ENCODE measurements at regions of chr7 and their contacts with region 1.

Region 1: DNA sequence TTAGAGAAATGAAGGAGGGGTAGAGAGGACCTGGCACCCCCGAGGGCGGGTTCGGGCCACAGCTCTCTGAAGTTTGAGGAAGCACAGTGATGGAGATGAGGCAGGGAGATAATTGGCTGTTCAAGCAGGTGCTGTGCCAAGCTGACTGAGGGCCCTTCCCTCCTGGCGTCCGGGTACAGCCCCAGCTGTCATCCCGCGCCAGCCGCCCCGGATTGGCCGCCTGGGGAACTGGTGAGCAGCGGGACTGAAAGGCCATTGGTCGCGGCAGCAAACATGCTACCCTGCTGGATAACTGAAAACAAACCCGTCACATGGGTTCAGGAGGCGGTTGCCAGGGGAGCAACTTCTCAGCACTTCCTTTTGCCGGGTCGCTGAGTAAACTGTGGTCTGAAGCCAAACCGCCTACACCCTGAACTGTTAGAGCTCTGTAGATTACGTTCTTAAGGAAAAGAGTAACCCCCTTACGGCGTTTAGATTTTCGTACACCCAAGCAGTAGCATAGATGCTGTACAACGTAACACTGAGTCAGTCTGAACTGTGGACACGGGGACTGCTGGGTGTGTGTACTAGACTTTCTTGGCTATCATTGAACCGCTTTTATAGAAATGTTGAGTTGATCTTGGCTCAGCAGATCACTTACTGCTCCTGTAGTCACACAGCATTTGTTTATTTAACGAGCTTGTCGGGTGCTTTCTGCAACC is 1.3 kb downstream of the INSIG1 start:
- DNase-seq: peak; percentile 92
- ATAC-seq: peak; percentile 85
- H3K4me3 ChIP-seq: peak overlapping the region; percentile 94
- H3K27ac ChIP-seq: peak overlapping the region; percentile 88
- H3K4me1 ChIP-seq: peaks cover 6% of the 10 kb centered on the region
- H3K27me3 ChIP-seq: no peaks in the 10 kb centered on the region
- CTCF ChIP-seq: no peak
- EP300 ChIP-seq: peak; percentile 43 to 57; a peak in 3 of 4 replicates
- POLR2A ChIP-seq: peak; percentile 84
- RAD21 ChIP-seq: no peak

Region 2: DNA sequence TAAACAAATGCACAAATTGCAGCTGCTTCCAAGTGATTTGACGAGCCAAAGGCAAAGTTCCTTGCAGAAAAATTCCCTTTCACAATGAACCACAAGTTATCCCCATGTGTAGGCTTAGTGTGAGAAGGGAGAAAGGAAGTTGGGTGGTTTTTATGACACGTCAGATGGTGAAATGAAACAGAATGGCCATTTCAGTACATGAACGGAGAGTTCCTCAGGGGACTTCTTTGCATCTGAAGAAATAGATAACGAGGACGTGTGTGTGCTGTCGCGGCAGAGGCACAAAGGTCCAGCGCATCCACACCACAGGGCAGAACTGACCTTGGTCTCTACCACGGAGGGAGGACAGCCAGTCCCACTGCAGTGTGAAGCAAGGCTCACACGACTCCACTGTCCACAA is 431.9 kb before region 1 on chr7:
- CTCF ChIA-PET with region 1: no interaction called
- POLR2A ChIA-PET with region 1: no interaction called
- RAD21 ChIA-PET with region 1: no interaction called
- SMC1A ChIA-PET with region 1: no interaction called
- in situ Hi-C with region 1: no loop called
- intact Hi-C with region 1: loop called (anchors 10 kb)
- DNase-seq: peak; percentile 59
- ATAC-seq: peak; percentile 80
- H3K4me3 ChIP-seq: no peak overlapping the region
- H3K27ac ChIP-seq: no peak overlapping the region
- H3K4me1 ChIP-seq: peaks cover 8% of the 10 kb centered on the region
- H3K27me3 ChIP-seq: no peaks in the 10 kb centered on the region
- CTCF ChIP-seq: no peak
- EP300 ChIP-seq: peak; percentile 58 to 77; a peak in 2 of 4 replicates
- POLR2A ChIP-seq: no peak
- RAD21 ChIP-seq: no peak

Region 3: DNA sequence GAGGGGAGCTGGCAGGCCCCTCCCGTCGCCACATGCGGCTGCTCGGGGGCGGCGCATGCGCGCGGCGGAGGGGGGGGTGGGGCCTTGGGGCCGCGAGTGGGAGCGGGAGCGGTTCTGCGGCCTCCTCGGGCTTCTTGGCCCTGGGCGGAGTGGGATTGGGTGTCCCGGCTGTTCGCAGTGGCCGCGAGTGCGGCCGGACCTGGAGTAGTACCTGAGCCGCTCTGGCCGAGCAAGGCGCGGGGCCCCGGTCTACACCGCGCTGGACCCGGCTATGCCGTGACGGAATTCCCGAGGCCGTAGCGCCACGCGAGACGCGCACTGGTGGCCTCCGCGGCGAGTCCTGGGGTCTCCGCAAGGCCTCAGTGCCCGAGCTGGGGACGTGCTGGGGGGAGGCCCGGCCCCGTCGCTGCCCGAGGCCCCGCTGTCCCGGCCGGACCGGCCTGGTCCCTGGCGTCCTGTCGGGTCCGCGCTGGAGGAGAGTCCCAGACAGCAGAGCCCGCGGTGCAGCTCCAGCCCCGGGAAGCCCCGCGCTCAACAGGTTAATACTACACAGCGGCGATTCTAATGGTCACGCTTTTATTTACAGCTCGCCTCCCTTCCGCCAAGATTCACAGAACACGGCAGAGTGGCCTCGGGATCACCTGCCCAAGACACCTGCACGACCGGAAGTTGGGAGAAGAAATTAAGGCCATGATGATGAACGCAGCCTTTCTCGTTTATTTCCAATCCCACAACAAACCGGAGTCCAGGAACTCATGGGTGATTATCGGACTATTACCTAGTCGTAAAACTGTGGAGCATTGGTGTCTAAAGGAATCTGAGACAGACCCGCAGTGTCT is 295.4 kb before region 1 on chr7:
- CTCF ChIA-PET with region 1: interaction called, 3 read pairs
- POLR2A ChIA-PET with region 1: interaction called, 7 read pairs
- RAD21 ChIA-PET with region 1: interaction called, 7 read pairs
- SMC1A ChIA-PET with region 1: interaction called, 3 read pairs
- in situ Hi-C with region 1: loop called (anchors 5 kb)
- intact Hi-C with region 1: loop called (anchors 5 kb)
- DNase-seq: no peak
- ATAC-seq: peak; percentile 75
- H3K4me3 ChIP-seq: peak overlapping the region; percentile 77
- H3K27ac ChIP-seq: peak overlapping the region; percentile 93
- H3K4me1 ChIP-seq: 0 out of 2 replicates have a peak, but pooled peaks cover 5% of the 10 kb centered on the region
- H3K27me3 ChIP-seq: no peaks in the 10 kb centered on the region
- CTCF ChIP-seq: no peak
- EP300 ChIP-seq: no peak
- POLR2A ChIP-seq: peak; percentile 87
- RAD21 ChIP-seq: no peak

Region 4: DNA sequence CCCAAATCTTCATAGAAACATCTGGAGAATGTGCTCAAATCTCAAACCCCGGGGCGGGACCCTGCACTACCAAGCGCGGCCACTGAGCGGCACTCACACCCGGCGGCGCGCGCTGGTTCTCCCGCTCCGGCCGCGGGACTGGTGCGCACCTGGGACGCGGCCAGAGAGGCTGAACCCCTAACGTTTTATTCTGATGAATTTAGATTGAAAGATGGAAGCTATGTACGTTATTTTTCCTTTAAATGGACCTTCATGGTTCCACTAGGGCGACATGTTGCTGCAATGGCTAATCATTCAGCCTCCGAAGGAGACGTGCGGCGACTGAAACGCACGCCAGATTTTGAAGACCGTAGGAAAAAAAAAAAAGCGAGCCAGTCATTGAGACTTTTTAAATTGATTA is 108.3 kb before region 1 on chr7:
- CTCF ChIA-PET with region 1: no interaction called
- POLR2A ChIA-PET with region 1: interaction called, 3 read pairs
- RAD21 ChIA-PET with region 1: no interaction called
- SMC1A ChIA-PET with region 1: interaction called, 3 read pairs
- in situ Hi-C with region 1: no loop called
- intact Hi-C with region 1: loop called (anchors 5 kb)
- DNase-seq: no peak
- ATAC-seq: peak; percentile 80
- H3K4me3 ChIP-seq: no peak overlapping the region
- H3K27ac ChIP-seq: no peak overlapping the region
- H3K4me1 ChIP-seq: peaks cover 7% of the 10 kb centered on the region; the same call in 1 of the 2 replicates
- H3K27me3 ChIP-seq: no peaks in the 10 kb centered on the region
- CTCF ChIP-seq: peak; percentile 76 to 91 (median 82)
- EP300 ChIP-seq: no peak
- POLR2A ChIP-seq: no peak
- RAD21 ChIP-seq: peak; percentile 93

Region 5: DNA sequence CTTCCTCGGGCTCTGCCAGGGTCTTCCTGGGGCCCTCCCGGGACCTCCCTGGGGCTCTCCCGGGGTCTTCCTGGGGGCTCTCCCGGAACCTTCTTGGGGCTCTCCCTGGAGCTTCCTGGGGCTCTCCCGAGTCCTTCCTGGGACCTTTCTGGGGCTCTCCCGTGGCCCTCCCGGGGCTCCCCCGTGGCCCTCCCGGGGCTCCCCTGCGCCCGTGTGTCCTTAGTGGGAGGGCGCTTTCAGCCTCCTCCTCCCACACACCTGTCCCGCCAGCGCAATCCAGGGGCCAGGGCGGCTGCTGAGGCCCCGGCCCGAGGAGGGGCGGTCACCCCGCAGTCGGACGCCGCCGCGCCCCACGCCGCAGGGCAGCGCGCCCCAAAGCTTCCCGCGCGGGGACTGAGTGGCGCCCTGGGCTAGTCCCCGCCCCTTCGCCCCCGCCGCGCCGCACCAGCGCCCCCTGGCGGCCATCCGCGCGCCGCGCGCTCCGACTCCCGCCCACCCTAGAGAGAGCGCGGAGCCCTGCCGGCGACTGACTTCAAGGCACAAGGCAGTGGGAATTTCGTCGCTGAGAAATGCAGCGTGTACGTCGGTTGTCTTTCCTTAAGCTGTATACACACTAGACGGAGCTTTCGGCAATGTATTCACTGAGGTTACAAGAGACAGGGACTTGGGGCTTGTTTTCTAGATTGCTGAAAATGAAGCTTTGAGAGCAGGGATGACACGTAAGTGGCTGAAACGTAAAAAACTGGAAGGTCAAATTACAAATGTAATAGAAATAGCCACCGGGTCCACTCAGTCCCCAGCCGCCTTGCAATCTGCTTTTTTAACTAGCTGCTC is 45.8 kb after region 1 on chr7:
- CTCF ChIA-PET with region 1: interaction called, 10 read pairs
- POLR2A ChIA-PET with region 1: interaction called, 7 read pairs
- RAD21 ChIA-PET with region 1: interaction called, 10 read pairs
- SMC1A ChIA-PET with region 1: interaction called, 6 read pairs
- in situ Hi-C with region 1: no loop called
- intact Hi-C with region 1: loop called (anchors 1 kb)
- DNase-seq: no peak
- ATAC-seq: peak; percentile 98
- H3K4me3 ChIP-seq: peak overlapping the region; percentile 63; the same call in 1 of the 2 replicates
- H3K27ac ChIP-seq: no peak overlapping the region
- H3K4me1 ChIP-seq: peaks cover 5% of the 10 kb centered on the region; the same call in 1 of the 2 replicates
- H3K27me3 ChIP-seq: no peaks in the 10 kb centered on the region
- CTCF ChIP-seq: peak; percentile 71 to 73 (median 72); a peak in 5 of 6 replicates
- EP300 ChIP-seq: no peak
- POLR2A ChIP-seq: peak; percentile 29; the same call in 1 of the 2 replicates
- RAD21 ChIP-seq: peak; percentile 90

Region 6: GRCh38 chr7:156918635-156919034 is 1619.7 kb after region 1 on chr7:
- CTCF ChIA-PET with region 1: no interaction called
- POLR2A ChIA-PET with region 1: no interaction called
- RAD21 ChIA-PET with region 1: no interaction called
- SMC1A ChIA-PET with region 1: no interaction called
- in situ Hi-C with region 1: no loop called
- intact Hi-C with region 1: loop called (anchors 5 kb)
- DNase-seq: no peak
- ATAC-seq: peak; percentile 51
- H3K4me3 ChIP-seq: no peak overlapping the region
- H3K27ac ChIP-seq: no peak overlapping the region
- H3K4me1 ChIP-seq: peaks cover 18% of the 10 kb centered on the region
- H3K27me3 ChIP-seq: no peaks in the 10 kb centered on the region
- CTCF ChIP-seq: no peak
- EP300 ChIP-seq: no peak; a peak in 1 of 4 replicates
- POLR2A ChIP-seq: no peak
- RAD21 ChIP-seq: no peak

Measured in GM12878 (cell line).